ENCODE measurements at regions of chr6 and their contacts with region 1.

Region 1: DNA sequence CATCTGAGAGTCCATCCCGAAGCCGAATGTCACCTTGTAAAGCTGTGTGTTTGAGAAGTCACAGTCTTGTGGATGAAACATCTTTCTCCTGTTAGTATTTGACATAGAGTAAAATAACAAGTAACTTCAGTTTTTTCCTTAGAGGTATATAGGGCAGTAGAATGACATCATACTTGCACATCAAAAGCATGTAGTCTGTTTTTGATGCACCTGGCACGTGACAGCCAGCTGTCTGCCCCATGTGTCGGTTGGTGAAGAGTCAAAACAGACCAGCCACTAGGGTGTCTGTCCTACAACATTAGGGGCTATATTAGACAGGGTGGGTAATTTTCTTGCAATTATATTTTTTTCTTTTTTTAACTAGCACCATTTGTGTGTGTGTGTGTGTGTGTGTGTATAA is 70.2 kb downstream of the SNX9 start:
- DNase-seq: peak in 3 of 5 donors; percentile 15 to 76 (median 18)
- H3K4me3 ChIP-seq: no peak overlapping the region
- H3K4me3 Mint-ChIP-seq: no peak overlapping the region
- H3K27ac ChIP-seq: no peak overlapping the region
- H3K27ac Mint-ChIP-seq: peak overlapping the region in 4 of 8 donors; percentile 23 to 71 (median 43)
- H3K4me1 ChIP-seq: peaks cover 24% of the 10 kb centered on the region
- H3K4me1 Mint-ChIP-seq: peaks cover 16 to 24% (median 23%) of the 10 kb centered on the region in 3 donors
- H3K27me3 ChIP-seq: no peaks in the 10 kb centered on the region
- H3K27me3 Mint-ChIP-seq: peaks cover 0 to 3% of the 10 kb centered on the region in 2 donors

Region 2: DNA sequence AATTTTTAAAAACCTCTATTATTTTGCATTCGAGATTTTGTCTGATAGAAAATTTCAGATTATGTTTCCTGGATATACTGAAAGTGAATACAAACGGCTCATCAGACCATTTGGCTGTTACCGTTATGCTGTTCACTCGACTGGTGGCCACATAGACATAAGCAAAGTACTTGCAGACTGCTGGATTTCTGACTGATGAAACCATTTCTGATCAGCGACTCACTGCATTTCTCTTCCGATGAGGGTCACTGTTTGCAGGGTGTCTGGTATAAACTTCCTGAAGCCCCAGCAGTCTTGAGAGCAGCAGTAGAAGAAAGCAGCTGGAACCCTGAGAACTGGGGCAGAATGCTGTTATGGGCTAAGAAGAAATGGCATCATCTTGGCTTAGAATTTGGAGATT is 52.5 kb before region 1 on chr6:
- CTCF ChIA-PET with region 1: interaction called, 3 read pairs
- POLR2A ChIA-PET with region 1: interaction called, 11 read pairs
- DNase-seq: no peak
- H3K4me3 ChIP-seq: no peak overlapping the region
- H3K4me3 Mint-ChIP-seq: no peak overlapping the region
- H3K27ac ChIP-seq: no peak overlapping the region
- H3K27ac Mint-ChIP-seq: no peak overlapping the region
- H3K4me1 ChIP-seq: peaks cover 12% of the 10 kb centered on the region
- H3K4me1 Mint-ChIP-seq: peaks cover 17 to 64% (median 31%) of the 10 kb centered on the region in 3 donors
- H3K27me3 ChIP-seq: no peaks in the 10 kb centered on the region
- H3K27me3 Mint-ChIP-seq: peaks cover 0 to 3% of the 10 kb centered on the region in 2 donors

Region 3: GRCh38 chr6:157937916-157938315 is 44.7 kb after region 1 on chr6:
- CTCF ChIA-PET with region 1: no interaction called
- POLR2A ChIA-PET with region 1: no interaction called
- DNase-seq: no peak
- H3K4me3 ChIP-seq: no peak overlapping the region
- H3K4me3 Mint-ChIP-seq: no peak overlapping the region
- H3K27ac ChIP-seq: no peak overlapping the region
- H3K27ac Mint-ChIP-seq: no peak overlapping the region
- H3K4me1 ChIP-seq: no peaks in the 10 kb centered on the region
- H3K4me1 Mint-ChIP-seq: no peaks in the 10 kb centered on the region
- H3K27me3 ChIP-seq: no peaks in the 10 kb centered on the region
- H3K27me3 Mint-ChIP-seq: no peaks in the 10 kb centered on the region

Region 4: DNA sequence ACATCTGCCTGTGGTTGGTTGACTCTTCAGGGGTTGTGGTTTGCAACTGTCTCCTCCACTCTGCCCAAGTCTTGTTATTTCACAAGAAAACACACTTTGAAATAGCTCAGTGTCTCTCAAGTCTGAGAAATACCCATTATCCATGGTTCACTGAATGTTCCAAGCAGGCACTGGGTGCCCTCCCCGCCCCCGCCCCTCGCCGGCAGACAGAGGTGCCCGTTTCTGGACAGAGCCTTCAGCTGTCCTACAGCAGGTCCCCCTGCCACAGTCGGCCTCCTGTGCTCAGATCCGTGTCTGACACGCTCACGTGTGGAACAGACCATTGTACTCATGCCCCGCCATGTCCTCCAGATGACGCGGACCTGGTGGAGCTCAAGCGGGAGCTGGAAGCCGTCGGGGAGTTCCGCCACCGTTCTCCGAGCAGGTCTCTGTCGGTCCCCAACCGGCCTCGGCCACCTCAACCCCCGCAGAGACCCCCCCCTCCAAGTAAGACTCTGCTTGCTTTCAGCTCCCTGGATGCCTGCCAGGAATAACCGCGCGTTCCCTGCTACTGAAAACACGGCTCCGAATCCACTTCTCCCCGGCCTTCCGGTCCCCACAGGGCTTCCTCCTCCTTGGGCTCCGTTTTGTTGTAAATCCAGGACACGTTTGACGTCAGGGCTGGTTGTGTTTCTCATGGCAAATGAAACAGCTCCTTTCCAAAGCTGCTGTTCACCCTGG is 193.4 kb after region 1 on chr6:
- CTCF ChIA-PET with region 1: no interaction called
- POLR2A ChIA-PET with region 1: no interaction called
- DNase-seq: no peak
- H3K4me3 ChIP-seq: no peak overlapping the region
- H3K4me3 Mint-ChIP-seq: no peak overlapping the region
- H3K27ac ChIP-seq: no peak overlapping the region
- H3K27ac Mint-ChIP-seq: no peak overlapping the region
- H3K4me1 ChIP-seq: no peaks in the 10 kb centered on the region
- H3K4me1 Mint-ChIP-seq: no peaks in the 10 kb centered on the region
- H3K27me3 ChIP-seq: no peaks in the 10 kb centered on the region
- H3K27me3 Mint-ChIP-seq: no peaks in the 10 kb centered on the region

Measured in CD8-positive, alpha-beta memory T cell (primary cell).